ENCODE measurements at regions of chr4 and their contacts with region 1.

Region 1: GRCh38 chr4:184237612-184238011 is 19.9 kb upstream of the ENPP6 start:
- DNase-seq: peak; percentile 87
- H3K4me3 Mint-ChIP-seq: peak overlapping the region; percentile 68
- H3K27ac Mint-ChIP-seq: peak overlapping the region; percentile 94
- H3K4me1 Mint-ChIP-seq: peaks cover 51% of the 10 kb centered on the region
- H3K27me3 Mint-ChIP-seq: no peaks in the 10 kb centered on the region

Region 2: DNA sequence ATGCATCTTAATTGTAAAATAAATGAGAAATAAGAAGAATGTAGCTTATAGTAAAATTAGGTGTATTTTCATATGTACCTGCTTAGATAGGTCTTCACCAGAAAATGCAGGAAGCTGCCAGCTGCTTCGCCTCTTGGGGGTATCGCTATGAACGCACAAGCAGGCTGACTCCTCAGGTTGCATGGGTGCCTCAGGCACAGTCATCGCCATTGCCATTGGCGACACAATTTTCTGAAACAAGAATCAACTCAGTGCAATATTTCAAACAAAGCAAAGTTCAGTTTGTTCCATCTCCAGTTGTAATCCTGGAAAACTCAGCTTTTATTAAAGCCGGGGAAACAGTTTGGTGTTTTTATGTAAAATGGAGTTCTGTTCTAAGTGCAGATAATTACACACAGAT is 302.9 kb before region 1 on chr4:
- intact Hi-C with region 1: no loop called
- DNase-seq: no peak
- H3K4me3 Mint-ChIP-seq: no peak overlapping the region
- H3K27ac Mint-ChIP-seq: no peak overlapping the region
- H3K4me1 Mint-ChIP-seq: no peaks in the 10 kb centered on the region
- H3K27me3 Mint-ChIP-seq: peaks cover 3% of the 10 kb centered on the region

Region 3: DNA sequence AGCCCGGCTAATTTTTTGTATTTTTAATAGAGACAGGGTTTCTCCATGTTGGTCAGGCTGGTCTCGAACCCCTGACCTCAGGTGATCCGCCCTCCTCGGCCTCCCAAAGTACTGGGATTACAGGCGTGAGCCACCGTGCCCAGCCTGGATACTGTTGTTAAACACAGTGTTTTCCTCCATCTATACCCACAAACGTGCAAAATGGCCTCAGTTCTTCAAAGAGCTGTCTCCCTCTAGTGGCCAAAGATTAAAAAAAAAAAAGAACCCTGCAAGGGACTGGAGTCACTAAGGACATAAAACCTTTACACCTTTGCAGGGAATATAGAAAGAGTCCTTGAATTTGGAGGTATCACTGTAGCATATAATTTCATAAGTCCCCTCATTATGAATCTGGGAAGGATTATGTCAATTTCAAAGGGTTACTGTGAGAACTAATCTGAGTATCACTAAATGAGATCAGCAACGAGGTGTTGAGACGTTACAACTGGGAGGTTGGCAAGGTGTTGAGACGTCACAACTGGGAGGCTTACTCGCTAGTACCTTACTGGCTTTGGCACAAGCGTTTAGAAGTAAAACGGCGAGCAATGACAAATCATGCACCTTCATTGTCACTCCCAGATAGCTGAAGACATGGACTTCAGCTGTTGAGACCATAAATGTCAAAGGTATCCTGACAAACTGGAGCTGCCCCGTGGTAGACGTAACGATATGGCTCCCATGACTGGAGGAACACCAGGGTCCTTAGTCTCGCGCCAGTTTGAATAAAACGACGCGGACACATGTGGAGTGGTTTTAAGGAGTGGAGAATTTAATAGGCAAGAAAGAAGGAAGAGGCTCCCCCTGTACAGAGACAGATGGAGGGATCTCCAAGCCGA is 13.4 kb after region 1 on chr4:
- intact Hi-C with region 1: loop called (anchors 1 kb)
- DNase-seq: peak; percentile 83
- H3K4me3 Mint-ChIP-seq: no peak overlapping the region
- H3K27ac Mint-ChIP-seq: peak overlapping the region; percentile 89
- H3K4me1 Mint-ChIP-seq: peaks cover 15% of the 10 kb centered on the region
- H3K27me3 Mint-ChIP-seq: no peaks in the 10 kb centered on the region

Region 4: DNA sequence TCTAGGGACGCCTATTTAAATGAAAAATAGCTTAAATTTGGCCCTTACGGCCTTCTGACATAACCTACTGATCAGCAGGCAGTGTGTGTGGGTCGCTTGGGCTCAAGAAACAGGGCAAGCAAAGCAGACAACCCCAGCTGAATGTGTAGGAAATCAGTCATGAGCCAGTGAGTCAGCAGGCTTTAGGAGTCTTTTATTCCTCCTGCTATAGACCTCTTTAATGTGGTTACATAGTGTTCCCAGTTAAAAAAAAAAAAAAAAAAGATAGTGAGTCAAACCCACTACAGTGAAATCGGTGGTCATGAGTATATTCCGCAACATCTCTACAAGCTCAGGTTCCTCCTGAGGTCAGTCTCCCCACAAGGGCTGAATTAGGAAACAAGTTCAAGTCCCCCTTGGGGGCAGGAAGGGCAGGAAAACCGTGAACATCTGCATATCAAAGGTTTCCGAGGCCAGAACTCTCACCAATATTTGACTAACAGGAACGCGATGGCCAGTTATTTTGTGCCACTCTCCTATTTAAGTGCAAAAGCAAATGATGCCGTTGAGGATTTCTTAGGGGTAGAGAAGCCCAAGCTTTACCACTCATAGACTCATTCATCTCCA is 555.4 kb after region 1 on chr4:
- intact Hi-C with region 1: loop called (anchors 1 kb)
- DNase-seq: peak; percentile 69
- H3K4me3 Mint-ChIP-seq: peak overlapping the region; percentile 40
- H3K27ac Mint-ChIP-seq: peak overlapping the region; percentile 74
- H3K4me1 Mint-ChIP-seq: peaks cover 50% of the 10 kb centered on the region
- H3K27me3 Mint-ChIP-seq: no peaks in the 10 kb centered on the region

Measured in activated CD4-positive, alpha-beta T cell treated with anti-CD3 and anti-CD28 coated beads, Interleukin-2, amount 10 ng/mL, durations not matched to agents 24 days and 14 days (primary cell).